Activated CD8-positive, alpha-beta T cell treated with anti-CD3 and anti-CD28 coated beads, Interleukin-2, amount 10 ng/mL, durations not matched to agents 7 days and 5 days (primary cell): ENCODE measurements at regions of chrX and their contacts with region 1.

Region 1: DNA sequence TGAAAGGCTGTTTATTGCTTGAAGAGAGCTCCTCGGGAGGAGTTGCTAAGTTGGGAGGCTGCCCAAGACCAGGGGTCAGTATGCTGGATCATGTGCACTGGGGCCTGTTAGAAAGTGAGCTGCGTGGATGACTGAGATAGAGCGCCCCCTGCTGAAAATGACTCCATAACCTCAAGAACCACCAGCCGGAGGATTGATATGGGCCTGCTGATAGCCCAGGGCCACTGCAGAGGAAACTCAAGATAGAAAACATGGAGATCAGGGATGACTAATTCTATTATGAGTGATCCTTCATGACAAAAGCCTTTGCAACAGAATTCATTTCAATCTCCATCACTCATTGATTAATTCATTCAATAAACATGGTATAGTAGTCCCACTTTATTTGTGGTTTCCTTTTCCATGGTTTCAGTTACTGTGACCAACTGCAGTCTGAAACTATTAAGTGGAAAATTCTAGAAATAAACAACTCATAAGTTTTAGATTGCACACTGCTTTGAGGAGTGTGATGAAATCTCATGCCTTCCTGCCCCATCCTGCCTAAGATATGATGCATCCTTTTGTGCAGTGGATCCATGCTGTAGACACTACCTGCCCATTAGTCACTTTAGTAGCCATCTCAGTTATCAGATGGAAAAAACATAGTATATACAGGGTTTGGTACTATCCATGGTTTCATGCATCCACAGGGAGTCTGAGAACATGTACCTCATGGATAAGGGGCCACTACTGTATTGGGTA is 126.7 kb upstream of the MBNL3 start:
- DNase-seq: peak; percentile 52
- ATAC-seq: peak; percentile 61
- H3K4me3 Mint-ChIP-seq: no peak overlapping the region
- H3K27ac Mint-ChIP-seq: no peak overlapping the region
- H3K4me1 Mint-ChIP-seq: no peaks in the 10 kb centered on the region
- H3K27me3 Mint-ChIP-seq: no peaks in the 10 kb centered on the region

Region 2: GRCh38 chrX:131841496-131842410 is 773.8 kb before region 1 on chrX:
- CTCF ChIA-PET with region 1: interaction called, 10 read pairs
- POLR2A ChIA-PET with region 1: no interaction called
- DNase-seq: peak; percentile 40
- ATAC-seq: peak; percentile 70
- H3K4me3 Mint-ChIP-seq: no peak overlapping the region
- H3K27ac Mint-ChIP-seq: peak overlapping the region; percentile 49
- H3K4me1 Mint-ChIP-seq: no peaks in the 10 kb centered on the region
- H3K27me3 Mint-ChIP-seq: no peaks in the 10 kb centered on the region

Region 3: DNA sequence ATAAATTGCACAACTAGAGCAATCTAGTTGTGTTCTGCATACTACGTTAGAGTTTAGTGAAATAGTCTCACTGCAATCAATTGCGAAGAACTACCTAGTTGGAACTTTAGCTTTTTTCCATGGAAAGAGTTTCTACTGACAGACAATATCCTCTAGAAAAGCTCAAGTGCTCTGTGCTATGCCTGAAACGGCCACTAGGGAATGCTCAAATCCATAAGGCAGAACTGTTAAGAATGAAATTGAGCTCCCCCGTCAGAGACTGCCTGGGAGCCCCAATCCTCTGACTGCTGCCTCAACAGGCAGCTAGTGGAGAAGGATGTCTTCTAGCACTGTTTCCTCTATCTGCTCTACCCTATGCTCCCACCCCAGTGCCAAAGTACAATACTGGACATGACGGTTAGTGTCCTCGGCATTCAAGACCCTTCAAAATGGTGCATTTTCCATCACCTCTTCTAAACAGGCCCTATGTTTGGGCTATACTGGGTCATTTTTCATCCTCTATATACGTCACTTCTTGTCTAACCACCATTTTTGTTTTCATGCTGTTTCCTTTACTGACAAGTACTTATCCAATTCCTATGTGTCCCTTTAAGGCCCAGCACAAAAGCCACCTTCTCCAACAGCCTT is 523.0 kb before region 1 on chrX:
- CTCF ChIA-PET with region 1: interaction called, 13 read pairs
- POLR2A ChIA-PET with region 1: no interaction called
- DNase-seq: peak; percentile 58
- ATAC-seq: peak; percentile 64
- H3K4me3 Mint-ChIP-seq: no peak overlapping the region
- H3K27ac Mint-ChIP-seq: no peak overlapping the region
- H3K4me1 Mint-ChIP-seq: peaks cover 13% of the 10 kb centered on the region
- H3K27me3 Mint-ChIP-seq: no peaks in the 10 kb centered on the region

Region 4: GRCh38 chrX:132292793-132293192 is 322.8 kb before region 1 on chrX:
- CTCF ChIA-PET with region 1: interaction called, 36 read pairs
- POLR2A ChIA-PET with region 1: no interaction called
- DNase-seq: peak; percentile 30
- ATAC-seq: peak; percentile 39
- H3K4me3 Mint-ChIP-seq: no peak overlapping the region
- H3K27ac Mint-ChIP-seq: no peak overlapping the region
- H3K4me1 Mint-ChIP-seq: no peaks in the 10 kb centered on the region
- H3K27me3 Mint-ChIP-seq: no peaks in the 10 kb centered on the region

Region 5: DNA sequence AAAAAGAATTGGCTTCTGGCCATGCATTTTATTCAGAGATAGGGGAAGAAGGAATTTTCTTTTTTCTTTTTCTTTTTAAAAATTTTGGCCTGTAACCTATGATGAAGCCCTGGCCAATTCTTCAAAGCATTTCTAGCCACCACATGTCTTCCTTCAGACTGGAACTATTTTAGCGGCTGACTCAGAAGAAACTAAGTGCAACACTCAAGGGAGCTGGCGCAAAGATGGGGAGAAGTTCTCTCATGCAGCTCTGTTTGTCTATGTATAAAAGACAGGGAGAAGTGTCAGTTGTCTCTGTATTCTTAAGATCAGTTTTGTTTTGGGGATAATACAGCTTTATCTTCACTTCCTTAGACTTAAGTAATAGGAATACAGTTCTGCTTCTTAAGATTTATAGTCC is 172.9 kb before region 1 on chrX:
- CTCF ChIA-PET with region 1: no interaction called
- POLR2A ChIA-PET with region 1: no interaction called
- DNase-seq: no peak
- ATAC-seq: no peak
- H3K4me3 Mint-ChIP-seq: no peak overlapping the region
- H3K27ac Mint-ChIP-seq: no peak overlapping the region
- H3K4me1 Mint-ChIP-seq: no peaks in the 10 kb centered on the region
- H3K27me3 Mint-ChIP-seq: no peaks in the 10 kb centered on the region

Region 6: GRCh38 chrX:132488819-132489577 is 126.6 kb before region 1 on chrX and contains the start of gene MBNL3:
- CTCF ChIA-PET with region 1: interaction called, 13 read pairs
- POLR2A ChIA-PET with region 1: no interaction called
- DNase-seq: peak; percentile 71
- ATAC-seq: peak; percentile 78
- H3K4me3 Mint-ChIP-seq: peak within 1 kb of the TSS; percentile 96
- H3K27ac Mint-ChIP-seq: peak within 1 kb of the TSS; percentile 97
- H3K4me1 Mint-ChIP-seq: peaks cover 48% of the 10 kb centered on the region
- H3K27me3 Mint-ChIP-seq: no peaks in the 10 kb centered on the region
- total RNA-seq, gene MBNL3: 30.0 TPM